IMR-90 (cell line): ENCODE measurements at regions of chr7 and their contacts with region 1.

Region 1: GRCh38 chr7:106659963-106660861 is 746 bp downstream of the CCDC71L start:
- DNase-seq: peak; percentile 74
- ATAC-seq: peak; percentile 60
- H3K4me3 ChIP-seq: peak overlapping the region; percentile 84
- H3K27ac ChIP-seq: peak overlapping the region; percentile 97
- H3K4me1 ChIP-seq: 0 out of 2 replicates have a peak, but pooled peaks cover 2% of the 10 kb centered on the region
- H3K27me3 ChIP-seq: no peaks in the 10 kb centered on the region
- CTCF ChIP-seq: peak; percentile 73
- POLR2A ChIP-seq: no peak
- RAD21 ChIP-seq: peak; percentile 78

Region 2: GRCh38 chr7:106285051-106285854 is 375.0 kb before region 1 on chr7:
- CTCF ChIA-PET with region 1: no interaction called
- POLR2A ChIA-PET with region 1: no interaction called
- dilution Hi-C with region 1: no loop called
- in situ Hi-C with region 1: no loop called
- intact Hi-C with region 1: loop called (anchors 2 kb)
- DNase-seq: peak; percentile 97
- ATAC-seq: peak; percentile 96
- H3K4me3 ChIP-seq: peak overlapping the region; percentile 96
- H3K27ac ChIP-seq: peak overlapping the region; percentile 97
- H3K4me1 ChIP-seq: peaks cover 2% of the 10 kb centered on the region; the same call in 1 of the 2 replicates
- H3K27me3 ChIP-seq: no peaks in the 10 kb centered on the region
- CTCF ChIP-seq: no peak
- POLR2A ChIP-seq: peak; percentile 80
- RAD21 ChIP-seq: no peak

Region 3: DNA sequence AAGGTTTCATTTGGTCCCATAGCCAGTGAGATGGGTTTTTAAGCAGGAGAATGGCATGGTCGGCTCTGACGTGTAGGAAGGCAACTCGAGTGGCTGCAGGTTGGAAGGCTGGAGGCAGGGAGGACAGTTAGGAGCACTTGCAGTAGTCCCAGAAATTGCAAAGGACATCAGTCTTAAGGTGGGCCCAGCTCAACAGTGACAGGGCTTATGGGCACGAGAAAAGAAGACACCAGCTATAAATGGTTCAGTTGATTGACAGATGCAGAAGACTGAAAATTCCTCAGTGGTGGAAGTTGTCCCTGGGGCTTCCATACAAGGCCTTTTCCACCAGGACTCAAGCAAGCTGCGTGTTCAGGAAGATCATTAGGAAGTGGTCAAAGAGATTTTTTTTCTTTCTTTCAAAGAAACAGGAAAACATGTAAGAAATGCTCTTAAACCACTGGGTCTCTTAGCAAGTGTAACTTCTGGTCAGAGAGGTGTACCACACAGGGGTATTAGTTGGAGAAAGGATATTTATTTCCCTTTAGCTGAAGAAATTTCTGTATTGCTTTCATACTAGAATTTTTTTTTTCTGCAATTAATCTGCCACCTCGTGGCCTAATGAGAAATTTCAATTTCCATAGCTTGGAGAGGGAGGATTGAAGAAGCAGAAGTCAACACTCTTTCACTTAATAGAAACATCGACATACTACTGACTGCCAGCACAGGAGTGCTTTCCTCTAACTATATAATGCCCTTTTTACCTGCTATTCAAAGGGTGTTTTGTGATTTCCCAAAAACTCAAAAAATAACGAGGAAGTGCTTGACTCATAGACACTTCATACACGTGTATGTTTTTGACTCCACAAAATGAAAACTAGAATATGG is 198.0 kb before region 1 on chr7:
- CTCF ChIA-PET with region 1: no interaction called
- POLR2A ChIA-PET with region 1: no interaction called
- dilution Hi-C with region 1: no loop called
- in situ Hi-C with region 1: no loop called
- intact Hi-C with region 1: loop called (anchors 2 kb)
- DNase-seq: peak; percentile 52
- ATAC-seq: peak; percentile 64
- H3K4me3 ChIP-seq: no peak overlapping the region
- H3K27ac ChIP-seq: no peak overlapping the region
- H3K4me1 ChIP-seq: no peaks in the 10 kb centered on the region
- H3K27me3 ChIP-seq: no peaks in the 10 kb centered on the region
- CTCF ChIP-seq: peak; percentile 60
- POLR2A ChIP-seq: no peak
- RAD21 ChIP-seq: peak; percentile 61

Region 4: GRCh38 chr7:106717955-106718871 is 58.0 kb after region 1 on chr7:
- CTCF ChIA-PET with region 1: interaction called, 3 read pairs
- POLR2A ChIA-PET with region 1: no interaction called
- dilution Hi-C with region 1: no loop called
- in situ Hi-C with region 1: no loop called
- intact Hi-C with region 1: loop called (anchors 1 kb)
- DNase-seq: peak; percentile 98
- ATAC-seq: peak; percentile 92
- H3K4me3 ChIP-seq: no peak overlapping the region
- H3K27ac ChIP-seq: peak overlapping the region; percentile 94
- H3K4me1 ChIP-seq: peaks cover 11% of the 10 kb centered on the region
- H3K27me3 ChIP-seq: no peaks in the 10 kb centered on the region
- CTCF ChIP-seq: no peak
- POLR2A ChIP-seq: no peak
- RAD21 ChIP-seq: peak; percentile 9; the same call in 1 of the 2 replicates

Region 5: GRCh38 chr7:106947244-106947728 is 287.1 kb after region 1 on chr7:
- CTCF ChIA-PET with region 1: no interaction called
- POLR2A ChIA-PET with region 1: no interaction called
- dilution Hi-C with region 1: no loop called
- in situ Hi-C with region 1: no loop called
- intact Hi-C with region 1: loop called (anchors 1 kb)
- DNase-seq: peak; percentile 83
- ATAC-seq: peak; percentile 100
- H3K4me3 ChIP-seq: no peak overlapping the region
- H3K27ac ChIP-seq: no peak overlapping the region
- H3K4me1 ChIP-seq: no peaks in the 10 kb centered on the region; the same call in 1 of the 2 replicates
- H3K27me3 ChIP-seq: peaks cover 8% of the 10 kb centered on the region; the same call in 1 of the 2 replicates
- CTCF ChIP-seq: peak; percentile 86
- POLR2A ChIP-seq: no peak
- RAD21 ChIP-seq: peak; percentile 83